ENCODE measurements at regions of chr1 and their contacts with region 1.

Region 1: DNA sequence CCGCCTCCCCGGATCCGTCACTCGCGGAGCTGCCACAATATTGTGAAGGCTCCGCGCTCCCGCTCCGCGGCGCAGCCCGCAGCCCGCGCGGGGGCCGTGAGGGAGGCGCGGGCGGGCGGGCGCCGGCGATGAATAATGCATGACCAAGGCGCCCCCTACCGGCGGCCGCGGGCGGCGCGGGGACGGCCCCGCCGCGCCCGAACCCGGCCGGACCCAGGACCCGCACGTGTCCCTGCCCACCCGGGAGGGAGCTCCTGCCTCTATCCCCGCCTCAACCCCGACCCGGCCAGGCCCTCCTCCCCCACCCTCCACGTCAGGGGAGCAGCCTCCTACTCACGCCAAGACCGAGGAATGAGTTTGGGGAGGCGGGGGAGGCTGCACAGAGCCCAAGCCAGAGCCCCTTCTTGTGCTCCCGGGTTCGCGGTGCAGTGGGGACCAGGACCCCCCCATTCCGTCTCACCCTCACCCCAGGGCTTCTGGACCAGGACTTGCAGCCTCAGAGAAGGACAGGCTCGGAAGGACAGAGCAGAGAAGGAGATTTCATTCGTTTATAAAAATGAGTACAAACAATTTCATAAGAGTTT is 70.8 kb upstream of the CASZ1 start:
- DNase-seq: peak; percentile 66
- ATAC-seq: peak; percentile 81
- H3K4me3 Mint-ChIP-seq: no peak overlapping the region
- H3K27ac Mint-ChIP-seq: no peak overlapping the region
- H3K4me1 Mint-ChIP-seq: peaks cover 12% of the 10 kb centered on the region
- H3K27me3 Mint-ChIP-seq: peaks cover 58% of the 10 kb centered on the region
- CTCF ChIP-seq: no peak

Region 2: DNA sequence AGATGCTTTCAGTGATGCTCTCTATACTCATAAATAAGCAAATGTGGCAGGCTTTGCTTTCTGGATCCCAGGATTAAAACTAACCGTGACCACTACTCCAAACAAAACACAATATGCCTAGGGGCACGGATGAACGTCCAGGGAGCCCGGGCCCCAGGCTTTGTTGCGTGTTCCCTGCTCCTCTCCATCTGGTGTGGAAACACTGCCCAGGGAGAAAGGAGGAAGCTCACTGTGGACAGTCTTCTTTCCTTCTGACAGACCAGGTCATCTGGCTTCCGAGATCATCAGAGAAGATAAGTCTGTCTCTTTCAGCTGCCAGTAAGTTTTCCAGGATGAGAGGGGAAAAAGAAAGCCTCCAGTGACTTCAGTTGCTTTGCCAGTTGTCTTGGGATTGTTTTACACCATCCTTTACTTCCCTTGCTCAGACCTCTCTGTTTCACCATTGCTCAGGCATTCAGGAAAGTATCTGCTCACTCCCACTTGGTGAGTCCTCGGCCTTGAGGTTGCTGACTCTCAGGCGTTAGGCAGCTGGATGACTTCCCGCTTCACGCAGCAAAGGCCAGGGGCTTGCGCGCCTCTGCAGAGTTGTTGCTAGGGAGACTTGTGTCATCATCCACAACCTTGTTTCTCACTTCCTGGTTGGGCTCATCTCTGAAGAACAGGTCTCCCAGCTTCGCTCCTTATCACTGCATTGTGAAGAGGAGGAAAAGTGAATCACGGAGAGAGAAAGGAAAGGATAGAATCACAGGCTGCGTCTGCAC is 489.0 kb before region 1 on chr1:
- CTCF ChIA-PET with region 1: no interaction called
- POLR2A ChIA-PET with region 1: no interaction called
- intact Hi-C with region 1: loop called (anchors 5 kb)
- DNase-seq: no peak
- ATAC-seq: no peak
- H3K4me3 Mint-ChIP-seq: no peak overlapping the region
- H3K27ac Mint-ChIP-seq: no peak overlapping the region
- H3K4me1 Mint-ChIP-seq: peaks cover 2% of the 10 kb centered on the region
- H3K27me3 Mint-ChIP-seq: no peaks in the 10 kb centered on the region
- CTCF ChIP-seq: no peak

Measured in activated B cell treated with CpG ODN at 0.5 μM for 24 hours (primary cell).